H1 (cell line): ENCODE measurements at regions of chr11 and their contacts with region 1.

Region 1: GRCh38 chr11:36289226-36289852 is at the start of gene COMMD9:
- DNase-seq: peak; percentile 88 to 93
- H3K4me3 ChIP-seq: peak within 1 kb of the TSS; percentile 80 to 92 (median 88)
- H3K27ac ChIP-seq: no peak within 1 kb of the TSS
- H3K4me1 ChIP-seq: peaks cover 0 to 3% (median 0%) of the 10 kb centered on the region in 4 experiments; a peak in 4 of 7 replicates
- H3K27me3 ChIP-seq: peaks cover 0 to 5% (median 0%) of the 10 kb centered on the region in 4 experiments; a peak in 1 of 7 replicates
- CTCF ChIP-seq: no peak
- EP300 ChIP-seq: peak in 1 of 2 experiments; percentile 64; a peak in 1 of 3 replicates
- POLR2A ChIP-seq: peak; percentile 50 to 88
- RAD21 ChIP-seq: no peak
- total RNA-seq, gene COMMD9: 43.3 and 49.1 TPM in 2 replicates

Region 2: GRCh38 chr11:36273110-36273509 is 16.2 kb before region 1 on chr11:
- CTCF ChIA-PET with region 1: interaction called, 14 read pairs
- POLR2A ChIA-PET with region 1: interaction called, 4 read pairs
- DNase-seq: no peak
- H3K4me3 ChIP-seq: no peak overlapping the region
- H3K27ac ChIP-seq: no peak overlapping the region
- H3K4me1 ChIP-seq: no peaks in the 10 kb centered on the region
- H3K27me3 ChIP-seq: no peaks in the 10 kb centered on the region
- CTCF ChIP-seq: no peak
- EP300 ChIP-seq: no peak
- POLR2A ChIP-seq: no peak
- RAD21 ChIP-seq: no peak

Region 3: GRCh38 chr11:36300651-36301050 is 11.3 kb after region 1 on chr11:
- CTCF ChIA-PET with region 1: interaction called, 37 read pairs
- POLR2A ChIA-PET with region 1: interaction called, 3 read pairs
- DNase-seq: no peak
- H3K4me3 ChIP-seq: no peak overlapping the region
- H3K27ac ChIP-seq: no peak overlapping the region
- H3K4me1 ChIP-seq: no peaks in the 10 kb centered on the region
- H3K27me3 ChIP-seq: no peaks in the 10 kb centered on the region
- CTCF ChIP-seq: no peak
- EP300 ChIP-seq: no peak
- POLR2A ChIP-seq: no peak
- RAD21 ChIP-seq: no peak

Region 4: GRCh38 chr11:36389811-36390210 is 100.5 kb after region 1 on chr11:
- CTCF ChIA-PET with region 1: interaction called, 10 read pairs
- POLR2A ChIA-PET with region 1: interaction called, 3 read pairs
- DNase-seq: no peak
- H3K4me3 ChIP-seq: no peak overlapping the region
- H3K27ac ChIP-seq: no peak overlapping the region
- H3K4me1 ChIP-seq: no peaks in the 10 kb centered on the region; a peak in 1 of 7 replicates
- H3K27me3 ChIP-seq: no peaks in the 10 kb centered on the region
- CTCF ChIP-seq: no peak
- EP300 ChIP-seq: no peak
- POLR2A ChIP-seq: no peak
- RAD21 ChIP-seq: no peak

Region 5: GRCh38 chr11:36469063-36469462 is 179.7 kb after region 1 on chr11:
- CTCF ChIA-PET with region 1: interaction called, 67 read pairs
- POLR2A ChIA-PET with region 1: interaction called, 3 read pairs
- DNase-seq: peak; percentile 29 to 94
- H3K4me3 ChIP-seq: no peak overlapping the region
- H3K27ac ChIP-seq: no peak overlapping the region
- H3K4me1 ChIP-seq: peaks cover 0 to 4% (median under 1%) of the 10 kb centered on the region in 4 experiments; a peak in 1 of 7 replicates
- H3K27me3 ChIP-seq: no peaks in the 10 kb centered on the region
- CTCF ChIP-seq: peak; percentile 88 to 95 (median 89)
- EP300 ChIP-seq: no peak
- POLR2A ChIP-seq: no peak
- RAD21 ChIP-seq: peak; percentile 63 to 79